ENCODE measurements at regions of chr4 and their contacts with region 1.

Region 1: GRCh38 chr4:155322782-155323181 is 54.0 kb downstream of the MAP9 start:
- DNase-seq: no peak
- H3K4me3 ChIP-seq: no peak overlapping the region
- CTCF ChIP-seq: no peak
- POLR2A ChIP-seq: no peak

Region 2: DNA sequence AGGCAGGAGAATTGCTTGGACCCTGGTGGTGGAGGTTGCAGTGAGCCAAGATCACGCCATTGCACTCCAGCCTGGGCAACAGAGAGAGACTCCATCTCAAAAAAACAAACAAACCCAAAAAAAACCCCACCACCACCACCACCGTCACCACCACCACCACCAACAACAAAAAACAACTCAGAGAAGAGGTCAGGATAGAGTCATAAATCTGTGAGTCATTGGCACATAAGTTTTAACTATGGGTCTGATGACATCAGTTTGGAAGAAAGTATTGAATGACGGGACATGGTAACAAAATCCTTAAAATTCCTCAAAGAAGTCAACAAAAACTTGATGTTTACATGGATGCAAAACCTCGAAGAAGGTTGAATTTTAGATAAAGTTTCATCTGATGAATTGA is 1245.9 kb before region 1 on chr4:
- intact Hi-C with region 1: loop called (anchors 5 kb)
- DNase-seq: no peak
- H3K4me3 ChIP-seq: no peak overlapping the region
- CTCF ChIP-seq: no peak
- POLR2A ChIP-seq: no peak